H1 (cell line): ENCODE measurements at regions of chr17 and their contacts with region 1.

Region 1: DNA sequence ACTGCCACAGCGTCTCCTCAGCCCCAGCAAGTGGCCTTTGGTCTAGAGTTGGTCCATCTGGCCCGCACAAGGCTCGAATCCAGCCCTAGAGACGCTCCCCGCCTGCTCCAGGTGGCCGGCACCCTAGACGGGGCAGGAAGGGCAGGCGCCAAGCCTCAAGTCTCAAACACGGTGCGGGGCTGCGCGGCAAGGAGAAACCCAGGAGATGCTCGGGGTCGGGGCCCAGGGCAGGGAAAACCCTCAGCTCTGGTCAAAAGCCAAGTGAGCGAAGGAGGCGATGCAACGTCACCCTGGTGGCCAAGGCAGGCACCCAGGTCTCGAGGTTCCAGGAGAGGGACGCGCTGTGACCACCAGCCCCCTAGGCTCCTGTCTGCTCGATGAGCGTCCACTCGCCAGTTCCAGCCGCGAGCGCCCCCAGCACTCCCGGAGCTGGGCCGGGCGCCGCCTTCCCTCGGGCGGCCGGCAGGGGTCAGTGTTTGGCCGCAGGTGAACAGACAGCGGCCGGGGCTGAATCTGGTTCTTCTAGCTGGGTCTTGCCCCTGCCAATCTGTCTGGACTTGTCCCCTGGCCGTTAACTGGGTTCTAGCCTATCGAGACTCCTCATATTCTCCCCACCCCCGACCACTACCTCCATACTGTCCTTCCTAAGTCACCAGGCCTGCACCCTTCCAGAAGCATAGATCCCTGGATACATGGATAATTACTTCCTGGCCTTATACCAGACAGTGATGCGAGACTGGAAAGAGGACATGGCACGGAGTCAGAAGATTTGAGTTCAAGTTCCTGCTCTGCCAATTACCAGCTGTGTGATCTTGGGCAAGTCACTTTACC is 44.0 kb downstream of the PRAC1 start:
- DNase-seq: peak; percentile 51 to 97
- H3K4me3 ChIP-seq: peak overlapping the region; percentile 8 to 55 (median 40); a peak in 7 of 8 replicates
- H3K27ac ChIP-seq: no peak overlapping the region
- H3K4me1 ChIP-seq: peaks cover 0 to 9% (median 2%) of the 10 kb centered on the region in 4 experiments; a peak in 4 of 7 replicates
- H3K27me3 ChIP-seq: peaks cover 5 to 22% (median 19%) of the 10 kb centered on the region in 4 experiments
- CTCF ChIP-seq: peak; percentile 91 to 99 (median 91)
- EP300 ChIP-seq: no peak
- POLR2A ChIP-seq: no peak
- RAD21 ChIP-seq: peak; percentile 95 to 98

Region 2: GRCh38 chr17:48543107-48543853 is 135.1 kb before region 1 on chr17:
- CTCF ChIA-PET with region 1: no interaction called
- POLR2A ChIA-PET with region 1: no interaction called
- DNase-seq: peak in 1 of 2 experiments; percentile 84
- H3K4me3 ChIP-seq: peak overlapping the region in 2 of 4 experiments; percentile 11 to 38; a peak in 4 of 8 replicates
- H3K27ac ChIP-seq: no peak overlapping the region
- H3K4me1 ChIP-seq: peaks cover under 1 to 18% (median 12%) of the 10 kb centered on the region in 4 experiments
- H3K27me3 ChIP-seq: peaks cover 82 to 96% (median 93%) of the 10 kb centered on the region in 4 experiments
- CTCF ChIP-seq: peak in 1 of 3 experiments; percentile 16; a peak in 1 of 4 replicates
- EP300 ChIP-seq: no peak
- POLR2A ChIP-seq: no peak
- RAD21 ChIP-seq: no peak; a peak in 2 of 4 replicates

Region 3: GRCh38 chr17:48663134-48663924 is 15.0 kb before region 1 on chr17:
- CTCF ChIA-PET with region 1: interaction called, 24 read pairs
- POLR2A ChIA-PET with region 1: no interaction called
- DNase-seq: no peak
- H3K4me3 ChIP-seq: no peak overlapping the region
- H3K27ac ChIP-seq: no peak overlapping the region
- H3K4me1 ChIP-seq: no peaks in the 10 kb centered on the region
- H3K27me3 ChIP-seq: peaks cover 0 to 5% (median 0%) of the 10 kb centered on the region in 4 experiments; a peak in 1 of 7 replicates
- CTCF ChIP-seq: peak; percentile 26 to 40 (median 32); a peak in 3 of 4 replicates
- EP300 ChIP-seq: no peak
- POLR2A ChIP-seq: no peak
- RAD21 ChIP-seq: peak in 1 of 2 experiments; percentile 41; a peak in 1 of 4 replicates

Region 4: GRCh38 chr17:48711102-48711501 is 32.7 kb after region 1 on chr17:
- CTCF ChIA-PET with region 1: interaction called, 30 read pairs
- POLR2A ChIA-PET with region 1: interaction called, 6 read pairs
- DNase-seq: no peak
- H3K4me3 ChIP-seq: no peak overlapping the region
- H3K27ac ChIP-seq: no peak overlapping the region
- H3K4me1 ChIP-seq: peaks cover 0 to 2% (median 0%) of the 10 kb centered on the region in 4 experiments; a peak in 1 of 7 replicates
- H3K27me3 ChIP-seq: peaks cover 1 to 39% (median 20%) of the 10 kb centered on the region in 4 experiments
- CTCF ChIP-seq: no peak
- EP300 ChIP-seq: no peak
- POLR2A ChIP-seq: no peak
- RAD21 ChIP-seq: no peak

Region 5: DNA sequence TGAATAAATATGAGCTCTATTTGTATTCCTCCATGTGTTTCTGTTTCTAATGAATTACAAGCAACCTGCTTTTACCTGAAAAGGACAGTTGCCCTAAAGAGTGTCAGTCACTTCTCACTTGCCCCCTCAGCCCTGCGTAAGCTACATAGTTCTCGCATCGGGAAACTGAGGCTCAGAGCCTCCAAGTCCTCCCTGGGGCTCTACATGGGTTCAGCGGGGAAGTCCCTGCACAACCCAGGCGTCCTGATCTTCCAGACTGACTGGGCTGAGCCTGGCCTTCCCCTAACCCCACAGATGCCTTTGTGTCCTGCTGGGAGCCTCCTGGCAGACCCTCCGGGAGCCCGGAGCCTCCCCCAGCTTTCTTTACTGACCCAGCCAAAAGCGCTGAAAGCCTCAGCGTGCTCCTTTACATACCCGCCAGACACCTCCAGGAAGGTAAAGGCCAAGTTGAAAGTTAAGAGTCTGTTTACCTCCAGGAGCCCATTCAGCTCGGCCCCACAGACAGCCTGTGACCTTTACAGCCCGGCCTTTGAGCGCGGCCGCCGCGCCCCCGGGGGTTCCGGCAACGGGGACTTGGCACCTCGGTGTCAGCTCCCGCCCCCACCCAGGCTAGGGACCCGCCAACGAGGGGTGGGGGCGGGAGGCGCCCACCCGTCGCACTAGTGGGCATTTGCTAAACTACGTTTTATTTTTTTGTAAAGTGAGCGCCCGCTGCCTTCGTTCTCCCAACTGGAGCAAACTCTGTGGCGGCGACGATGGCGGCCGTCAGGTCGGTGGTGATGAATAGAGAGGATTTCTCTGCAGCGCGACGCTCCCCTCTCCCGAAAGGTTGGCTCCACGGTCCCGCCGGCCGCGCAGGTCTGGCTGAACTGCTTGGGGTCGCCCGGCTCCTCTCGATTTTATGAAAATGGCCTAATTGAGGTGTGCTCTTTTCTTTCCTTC is 54.6 kb after region 1 on chr17:
- CTCF ChIA-PET with region 1: interaction called, 101 read pairs
- POLR2A ChIA-PET with region 1: no interaction called
- DNase-seq: no peak
- H3K4me3 ChIP-seq: no peak overlapping the region
- H3K27ac ChIP-seq: no peak overlapping the region
- H3K4me1 ChIP-seq: peaks cover 0 to 9% (median 4%) of the 10 kb centered on the region in 4 experiments; a peak in 4 of 7 replicates
- H3K27me3 ChIP-seq: peaks cover 91 to 100% (median 100%) of the 10 kb centered on the region in 4 experiments
- CTCF ChIP-seq: no peak
- EP300 ChIP-seq: no peak
- POLR2A ChIP-seq: no peak
- RAD21 ChIP-seq: no peak

Region 6: GRCh38 chr17:48756830-48757251 is 78.5 kb after region 1 on chr17:
- CTCF ChIA-PET with region 1: interaction called, 17 read pairs
- POLR2A ChIA-PET with region 1: interaction called, 3 read pairs
- DNase-seq: no peak
- H3K4me3 ChIP-seq: no peak overlapping the region
- H3K27ac ChIP-seq: no peak overlapping the region
- H3K4me1 ChIP-seq: peaks cover 0 to 7% (median 3%) of the 10 kb centered on the region in 4 experiments; a peak in 4 of 7 replicates
- H3K27me3 ChIP-seq: peaks cover 63 to 88% (median 80%) of the 10 kb centered on the region in 4 experiments
- CTCF ChIP-seq: no peak
- EP300 ChIP-seq: no peak
- POLR2A ChIP-seq: no peak
- RAD21 ChIP-seq: no peak

Region 7: DNA sequence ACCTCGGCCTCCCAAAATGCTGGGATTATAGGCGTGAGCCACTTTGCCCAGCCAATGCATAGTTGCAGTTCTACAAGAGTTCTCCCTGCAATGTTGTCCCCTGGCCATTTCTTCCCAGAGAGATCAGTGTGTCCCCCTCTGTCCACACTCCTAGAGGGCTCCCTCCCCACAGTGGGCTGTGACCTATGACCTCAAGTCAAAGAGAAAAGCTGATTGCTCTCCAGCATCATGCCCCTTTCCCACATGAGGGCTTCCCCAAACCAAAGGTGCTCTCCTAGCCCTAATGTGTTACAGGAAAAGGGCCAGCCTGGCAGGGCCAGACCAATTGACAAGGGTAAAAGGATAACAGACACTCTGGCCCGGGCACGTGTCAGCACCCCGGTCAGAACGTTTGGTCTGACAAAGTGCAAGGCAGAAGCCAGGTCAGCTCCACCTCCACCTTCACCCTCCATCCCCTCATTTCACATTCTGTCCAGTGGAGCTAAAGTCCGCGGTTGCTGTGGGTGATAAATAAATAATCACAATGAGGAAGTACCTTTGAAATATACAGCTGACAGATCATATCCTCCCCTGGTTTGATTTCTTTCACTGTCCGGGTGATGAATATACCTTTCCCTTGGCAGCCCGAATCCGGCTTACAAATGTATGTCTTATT is 120.8 kb after region 1 on chr17:
- CTCF ChIA-PET with region 1: interaction called, 46 read pairs
- POLR2A ChIA-PET with region 1: no interaction called
- DNase-seq: no peak
- H3K4me3 ChIP-seq: no peak overlapping the region
- H3K27ac ChIP-seq: no peak overlapping the region
- H3K4me1 ChIP-seq: no peaks in the 10 kb centered on the region
- H3K27me3 ChIP-seq: peaks cover 0 to 2% (median 0%) of the 10 kb centered on the region in 4 experiments; a peak in 1 of 7 replicates
- CTCF ChIP-seq: no peak
- EP300 ChIP-seq: no peak
- POLR2A ChIP-seq: no peak
- RAD21 ChIP-seq: no peak